HepG2 (cell line): ENCODE measurements at regions of chr21 and their contacts with region 1.

Region 1: DNA sequence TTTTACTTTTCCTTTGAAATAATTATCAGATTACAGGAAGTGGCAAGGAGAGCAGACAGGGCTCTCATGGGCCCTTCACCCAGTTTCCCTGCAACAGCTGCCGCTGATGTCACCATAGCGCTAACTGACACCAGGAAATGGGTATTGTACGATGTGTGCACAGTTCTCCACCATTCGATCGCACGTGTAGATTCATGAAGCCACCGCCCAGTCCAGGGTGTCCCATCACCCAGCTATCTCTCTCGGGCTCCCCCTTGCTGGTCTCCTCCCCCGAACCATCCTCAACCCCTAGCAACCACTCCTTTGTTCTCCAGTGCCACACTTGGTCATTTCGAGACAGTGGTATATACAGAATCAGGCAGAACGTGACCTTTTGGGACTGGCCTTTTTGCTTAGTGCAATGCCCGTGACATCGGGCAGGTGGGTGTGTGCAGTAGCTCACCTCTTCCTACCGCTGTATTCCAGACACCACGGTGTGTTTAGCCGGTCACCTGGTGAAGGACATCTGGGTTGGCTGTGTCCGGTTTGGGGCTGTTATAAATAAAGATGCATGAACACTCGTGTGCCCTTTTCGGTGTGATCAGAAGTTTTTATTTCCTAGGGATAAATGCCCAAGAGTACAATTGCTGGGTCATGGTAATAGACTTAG is 118.4 kb downstream of the CRYAA start:
- DNase-seq: no peak
- ATAC-seq: no peak
- H3K4me3 ChIP-seq: no peak overlapping the region
- H3K27ac ChIP-seq: no peak overlapping the region
- H3K4me1 ChIP-seq: peaks cover 54% of the 10 kb centered on the region
- H3K27me3 ChIP-seq: no peaks in the 10 kb centered on the region
- CTCF ChIP-seq: no peak
- EP300 ChIP-seq: no peak
- POLR2A ChIP-seq: no peak
- RAD21 ChIP-seq: no peak

Region 2: DNA sequence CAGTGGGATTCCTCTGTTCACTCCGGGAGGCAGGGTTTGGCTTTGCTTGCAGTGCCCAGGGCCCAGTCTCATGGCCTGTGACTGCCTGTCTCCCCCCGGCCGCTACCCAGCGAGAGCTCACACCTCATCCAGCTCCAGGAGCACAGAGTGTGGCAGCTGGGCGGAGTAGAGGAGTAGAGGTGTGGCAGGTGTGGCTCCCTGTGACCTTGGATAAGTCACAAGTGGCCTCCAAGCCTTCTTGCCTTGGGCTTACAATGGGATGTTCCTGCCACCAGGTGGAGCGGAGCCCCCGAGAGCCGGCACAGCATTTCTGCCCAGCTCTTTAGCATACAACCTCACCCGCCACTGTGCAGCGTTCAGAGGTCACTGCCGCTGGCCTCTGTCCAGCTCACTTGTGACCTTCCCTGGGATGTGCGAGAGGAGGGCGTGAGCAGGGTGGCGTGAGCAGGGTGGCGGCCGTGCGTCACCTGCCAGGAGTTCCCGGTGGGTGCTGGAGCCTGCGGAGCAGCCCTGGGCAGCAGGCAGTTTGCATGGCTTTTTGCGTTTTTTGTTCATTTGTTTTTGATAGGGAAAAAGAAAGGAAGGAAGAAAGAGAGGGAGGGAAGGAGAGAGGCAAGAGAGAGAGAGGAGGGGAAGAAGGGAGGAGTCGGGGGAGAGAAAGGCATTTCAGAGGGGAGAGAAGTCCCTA is 76.0 kb before region 1 on chr21:
- CTCF ChIA-PET with region 1: no interaction called
- POLR2A ChIA-PET with region 1: interaction called, 12 read pairs
- in situ Hi-C with region 1: no loop called
- intact Hi-C with region 1: no loop called
- DNase-seq: peak; percentile 90
- ATAC-seq: peak; percentile 92
- H3K4me3 ChIP-seq: peak overlapping the region in 2 of 3 experiments; percentile 36 to 62; a peak in 4 of 6 replicates
- H3K27ac ChIP-seq: peak overlapping the region; percentile 59
- H3K4me1 ChIP-seq: peaks cover 36% of the 10 kb centered on the region
- H3K27me3 ChIP-seq: no peaks in the 10 kb centered on the region
- CTCF ChIP-seq: peak; percentile 97
- EP300 ChIP-seq: peak in 1 of 2 experiments; percentile 42; a peak in 1 of 4 replicates
- POLR2A ChIP-seq: peak in 1 of 2 experiments; percentile 51; a peak in 1 of 4 replicates
- RAD21 ChIP-seq: peak; percentile 95

Region 3: GRCh38 chr21:43300858-43301620 is 13.8 kb after region 1 on chr21:
- CTCF ChIA-PET with region 1: no interaction called
- POLR2A ChIA-PET with region 1: interaction called, 27 read pairs
- in situ Hi-C with region 1: no loop called
- intact Hi-C with region 1: no loop called
- DNase-seq: no peak
- ATAC-seq: peak; percentile 55
- H3K4me3 ChIP-seq: no peak overlapping the region; a peak in 1 of 6 replicates
- H3K27ac ChIP-seq: no peak overlapping the region
- H3K4me1 ChIP-seq: peaks cover 96% of the 10 kb centered on the region
- H3K27me3 ChIP-seq: peaks cover 2 to 26% of the 10 kb centered on the region in 2 experiments; a peak in 4 of 5 replicates
- CTCF ChIP-seq: no peak
- EP300 ChIP-seq: no peak
- POLR2A ChIP-seq: no peak
- RAD21 ChIP-seq: no peak

Region 4: GRCh38 chr21:43333298-43334062 is 46.2 kb after region 1 on chr21:
- CTCF ChIA-PET with region 1: no interaction called
- POLR2A ChIA-PET with region 1: interaction called, 8 read pairs
- in situ Hi-C with region 1: loop called (anchors 5 kb)
- intact Hi-C with region 1: no loop called
- DNase-seq: peak; percentile 68
- ATAC-seq: peak; percentile 78
- H3K4me3 ChIP-seq: peak overlapping the region; percentile 36 to 63 (median 40)
- H3K27ac ChIP-seq: peak overlapping the region; percentile 12
- H3K4me1 ChIP-seq: peaks cover 51% of the 10 kb centered on the region
- H3K27me3 ChIP-seq: peaks cover 1 to 30% of the 10 kb centered on the region in 2 experiments; a peak in 3 of 5 replicates
- CTCF ChIP-seq: 0 out of 2 replicates have a peak, but pooled peaks have one; percentile 5
- EP300 ChIP-seq: 0 out of 4 replicates have a peak, but pooled peaks of 1 of the 2 experiments have one; percentile 14
- POLR2A ChIP-seq: no peak
- RAD21 ChIP-seq: peak; percentile 11; the same call in 1 of the 2 replicates

Region 5: GRCh38 chr21:43340491-43341377 is 53.5 kb after region 1 on chr21:
- CTCF ChIA-PET with region 1: no interaction called
- POLR2A ChIA-PET with region 1: interaction called, 4 read pairs
- in situ Hi-C with region 1: no loop called
- intact Hi-C with region 1: loop called (anchors 5 kb)
- DNase-seq: no peak
- ATAC-seq: no peak
- H3K4me3 ChIP-seq: no peak overlapping the region
- H3K27ac ChIP-seq: no peak overlapping the region
- H3K4me1 ChIP-seq: peaks cover 50% of the 10 kb centered on the region
- H3K27me3 ChIP-seq: 0 out of 5 replicates have a peak, but pooled peaks cover 1 to 8% of the 10 kb centered on the region in 2 experiments
- CTCF ChIP-seq: no peak
- EP300 ChIP-seq: no peak
- POLR2A ChIP-seq: no peak
- RAD21 ChIP-seq: no peak

Region 6: GRCh38 chr21:43362321-43362791 is 75.1 kb after region 1 on chr21:
- CTCF ChIA-PET with region 1: no interaction called
- POLR2A ChIA-PET with region 1: no interaction called
- in situ Hi-C with region 1: no loop called
- intact Hi-C with region 1: loop called (anchors 2 kb)
- DNase-seq: no peak
- ATAC-seq: no peak
- H3K4me3 ChIP-seq: no peak overlapping the region
- H3K27ac ChIP-seq: no peak overlapping the region
- H3K4me1 ChIP-seq: peaks cover 46% of the 10 kb centered on the region
- H3K27me3 ChIP-seq: peaks cover 9 to 69% of the 10 kb centered on the region in 2 experiments; a peak in 3 of 5 replicates
- CTCF ChIP-seq: no peak
- EP300 ChIP-seq: no peak
- POLR2A ChIP-seq: no peak
- RAD21 ChIP-seq: no peak